Activated CD8-positive, alpha-beta memory T cell treated with anti-CD3 and anti-CD28 coated beads, Interleukin-2, amount 10 ng/mL, durations not matched to agents 7 days and 5 days (primary cell): ENCODE measurements at regions of chr1 and their contacts with region 1.

Region 1: DNA sequence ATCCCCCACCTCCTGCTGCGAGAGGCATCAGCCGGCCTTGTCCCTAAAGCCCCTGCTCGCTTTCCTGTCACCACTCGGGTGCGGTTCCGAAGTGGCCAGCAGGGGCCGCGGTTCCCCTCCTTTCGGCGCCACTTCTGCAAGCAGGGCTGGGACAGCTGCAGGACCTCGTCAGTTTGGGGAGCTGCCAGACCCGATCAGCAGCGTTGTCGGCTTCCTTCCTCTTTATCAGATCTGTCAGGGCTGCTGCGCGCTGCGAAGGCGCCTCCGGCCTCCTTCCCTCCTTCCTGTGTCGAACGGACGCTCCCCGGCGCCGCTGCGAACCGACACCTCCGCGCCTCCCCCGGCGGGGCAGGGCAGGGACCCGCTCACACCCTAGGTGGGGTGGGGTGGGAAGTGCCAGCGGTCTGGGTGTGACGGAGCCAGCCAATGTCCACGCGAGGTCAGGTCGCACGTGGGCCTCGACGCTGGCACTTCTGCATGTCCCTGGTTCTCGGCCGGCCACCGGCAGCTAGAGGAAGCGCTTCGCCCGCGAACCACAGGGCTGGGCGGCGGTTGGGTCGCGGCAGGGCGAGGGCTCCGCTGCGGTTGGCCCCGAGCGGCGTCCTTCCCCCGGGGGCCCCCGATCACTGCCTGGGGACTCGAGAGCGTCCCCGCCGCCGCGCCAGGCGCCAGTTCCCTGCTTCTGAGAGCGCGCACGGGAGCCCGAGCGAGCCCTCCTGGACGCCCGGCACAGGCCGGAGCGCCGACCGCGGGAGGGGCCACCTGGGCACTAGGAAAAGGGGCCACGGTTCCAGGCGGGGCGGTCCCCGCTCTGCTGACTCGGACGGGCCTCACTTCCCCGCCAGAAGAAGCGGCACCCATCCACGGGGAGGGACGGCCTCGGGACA is 81.8 kb downstream of the RUNX3 start:
- DNase-seq: peak; percentile 96
- ATAC-seq: peak; percentile 98
- H3K4me3 Mint-ChIP-seq: peak overlapping the region; percentile 54
- H3K27ac Mint-ChIP-seq: peak overlapping the region; percentile 66
- H3K4me1 Mint-ChIP-seq: peaks cover 24% of the 10 kb centered on the region
- H3K27me3 Mint-ChIP-seq: peaks cover 56% of the 10 kb centered on the region

Region 2: DNA sequence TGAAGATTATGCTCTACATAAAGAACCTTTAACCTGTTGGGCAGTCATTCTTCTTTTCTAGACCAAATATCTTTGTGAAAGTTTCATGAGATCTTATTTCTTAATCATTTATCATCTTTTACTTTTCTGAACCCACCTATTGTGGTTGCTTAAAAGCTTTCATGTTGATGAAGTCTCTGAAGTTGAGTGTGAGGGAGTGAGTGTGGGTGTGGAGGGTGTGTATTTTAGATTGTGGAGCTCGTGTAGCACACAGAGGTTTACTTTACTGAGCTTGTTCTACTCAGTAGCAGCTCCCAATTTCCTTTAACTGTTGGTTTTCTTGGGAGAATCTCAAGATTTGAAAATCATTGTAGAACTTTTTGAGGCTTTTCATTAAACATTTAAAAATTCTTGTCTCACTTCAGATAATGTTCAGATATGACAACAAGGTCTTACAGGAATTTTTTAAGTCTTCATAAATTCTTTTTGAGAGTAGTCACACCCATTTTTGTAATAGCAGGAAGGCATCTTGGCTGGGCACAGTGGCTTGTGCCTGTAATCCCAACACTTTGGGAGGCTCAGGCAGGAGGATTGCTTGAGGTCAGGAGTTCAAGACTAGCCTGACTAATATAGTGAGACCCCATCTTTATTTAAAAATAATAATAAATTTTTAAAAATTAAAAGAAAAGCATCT is 188.1 kb before region 1 on chr1:
- CTCF ChIA-PET with region 1: no interaction called
- DNase-seq: no peak
- ATAC-seq: no peak
- H3K4me3 Mint-ChIP-seq: no peak overlapping the region
- H3K27ac Mint-ChIP-seq: peak overlapping the region; percentile 69
- H3K4me1 Mint-ChIP-seq: peaks cover 16% of the 10 kb centered on the region
- H3K27me3 Mint-ChIP-seq: no peaks in the 10 kb centered on the region

Region 3: GRCh38 chr1:24830680-24831272 is 17.5 kb before region 1 on chr1:
- CTCF ChIA-PET with region 1: interaction called, 24 read pairs
- DNase-seq: no peak
- ATAC-seq: peak; percentile 53
- H3K4me3 Mint-ChIP-seq: no peak overlapping the region
- H3K27ac Mint-ChIP-seq: no peak overlapping the region
- H3K4me1 Mint-ChIP-seq: no peaks in the 10 kb centered on the region
- H3K27me3 Mint-ChIP-seq: peaks cover 11% of the 10 kb centered on the region

Region 4: GRCh38 chr1:24914226-24915069 is 66.2 kb after region 1 on chr1:
- CTCF ChIA-PET with region 1: interaction called, 11 read pairs
- DNase-seq: no peak
- ATAC-seq: no peak
- H3K4me3 Mint-ChIP-seq: no peak overlapping the region
- H3K27ac Mint-ChIP-seq: peak overlapping the region; percentile 96
- H3K4me1 Mint-ChIP-seq: peaks cover 96% of the 10 kb centered on the region
- H3K27me3 Mint-ChIP-seq: no peaks in the 10 kb centered on the region

Region 5: DNA sequence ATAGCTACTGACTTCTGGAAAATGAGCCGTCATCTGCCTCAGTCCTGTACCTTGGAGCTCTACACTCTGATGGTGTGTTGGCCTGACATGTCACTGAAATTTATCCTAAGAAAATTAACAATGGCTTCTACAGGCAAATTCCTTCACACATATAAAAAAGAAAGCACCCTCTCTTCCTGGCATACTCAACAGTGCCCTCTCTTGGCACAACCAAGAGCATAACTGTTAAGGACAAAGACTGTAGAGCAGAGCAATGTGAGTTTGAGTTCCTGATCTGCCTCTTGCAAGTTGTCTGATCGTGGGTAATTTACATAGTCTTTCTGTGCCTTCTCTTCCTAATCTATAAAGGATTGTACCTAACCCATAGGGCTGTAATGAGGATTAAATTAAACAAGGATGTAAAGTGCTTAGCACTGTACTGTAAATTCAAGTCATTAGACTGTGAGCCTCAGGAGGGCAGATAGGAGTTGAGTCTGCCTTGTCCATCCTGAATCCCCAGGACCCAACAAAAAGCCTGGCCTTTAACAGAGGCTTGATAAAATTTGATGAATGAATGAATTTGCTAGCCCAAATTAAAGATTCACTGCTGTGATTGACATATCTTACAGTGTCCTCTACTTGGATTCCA is 300.5 kb after region 1 on chr1:
- CTCF ChIA-PET with region 1: interaction called, 28 read pairs
- DNase-seq: peak; percentile 51
- ATAC-seq: peak; percentile 64
- H3K4me3 Mint-ChIP-seq: no peak overlapping the region
- H3K27ac Mint-ChIP-seq: no peak overlapping the region
- H3K4me1 Mint-ChIP-seq: peaks cover 5% of the 10 kb centered on the region
- H3K27me3 Mint-ChIP-seq: peaks cover 65% of the 10 kb centered on the region